Dendritic cell treated with granulocyte-macrophage colony-stimulating factor and Interleukin-4, amounts not matched to agents 40 ng/mL and 50 ng/mL, for 4 days (primary cell): ENCODE measurements at regions of chr15 and their contacts with region 1.

Region 1: GRCh38 chr15:48800811-48801455 is 9.9 kb downstream of the CEP152 start:
- H3K4me3 Mint-ChIP-seq: no peak overlapping the region
- H3K27ac Mint-ChIP-seq: no peak overlapping the region
- H3K4me1 Mint-ChIP-seq: peaks cover 5% of the 10 kb centered on the region
- H3K27me3 Mint-ChIP-seq: no peaks in the 10 kb centered on the region

Region 2: DNA sequence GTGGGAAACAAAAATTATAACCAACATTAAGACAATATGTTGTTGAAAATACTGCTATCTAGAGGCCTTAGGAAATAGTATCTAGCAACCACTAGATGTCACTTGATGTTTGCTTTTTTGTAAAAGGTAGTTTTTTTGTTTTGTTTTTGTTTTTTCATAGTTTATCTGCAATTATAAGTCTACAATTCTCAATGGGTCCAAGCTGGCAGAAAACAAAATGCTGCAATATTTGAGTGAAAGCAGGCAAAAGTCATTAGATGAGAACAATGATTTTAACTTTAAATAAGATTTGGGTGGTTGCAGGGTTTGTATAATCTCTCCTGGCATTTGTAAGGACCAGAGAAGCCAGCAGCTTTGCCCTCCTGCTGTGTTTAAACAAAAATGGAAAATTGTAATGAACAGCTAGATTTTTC is 442.7 kb before region 1 on chr15:
- intact Hi-C with region 1: loop called (anchors 5 kb)
- H3K4me3 Mint-ChIP-seq: no peak overlapping the region
- H3K27ac Mint-ChIP-seq: no peak overlapping the region
- H3K4me1 Mint-ChIP-seq: peaks cover 20% of the 10 kb centered on the region
- H3K27me3 Mint-ChIP-seq: no peaks in the 10 kb centered on the region

Region 3: DNA sequence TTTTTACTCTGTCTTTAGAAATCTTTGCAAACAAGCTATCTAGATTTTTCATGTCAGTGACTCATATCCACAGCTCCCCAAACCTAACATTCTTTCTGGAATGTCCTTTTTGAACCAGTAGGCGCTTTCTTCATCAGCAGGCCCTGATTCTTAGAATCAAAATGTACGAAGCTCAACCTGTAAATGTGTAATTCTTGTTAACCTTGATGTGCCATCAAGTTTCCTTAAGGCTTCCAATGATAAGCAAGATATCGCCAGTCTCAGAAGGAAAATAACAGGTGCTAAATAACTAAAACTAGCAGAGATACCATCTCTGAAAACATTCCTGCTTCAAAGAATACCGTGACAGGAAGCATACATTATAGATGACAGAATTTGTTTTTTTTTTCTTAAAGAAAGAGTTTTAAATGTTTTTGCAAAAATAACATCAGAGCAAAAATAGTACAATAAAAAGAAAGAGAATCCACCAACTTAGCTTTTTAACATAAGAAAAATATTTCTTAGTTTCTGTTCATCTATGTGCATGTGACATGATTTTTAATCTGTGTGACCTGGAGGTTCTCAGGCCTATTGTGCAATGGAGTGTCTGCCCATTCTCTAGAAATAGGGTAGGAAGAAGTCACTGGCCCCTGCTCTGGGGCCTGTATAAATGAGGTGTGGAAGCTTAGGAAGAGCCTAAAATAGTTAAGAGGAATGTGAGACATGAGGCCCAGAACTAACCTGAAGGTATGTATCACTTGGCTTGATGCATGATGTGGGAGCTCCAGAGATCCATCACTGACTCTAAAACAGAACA is 260.0 kb after region 1 on chr15:
- intact Hi-C with region 1: no loop called
- H3K4me3 Mint-ChIP-seq: no peak overlapping the region
- H3K27ac Mint-ChIP-seq: no peak overlapping the region
- H3K4me1 Mint-ChIP-seq: peaks cover 8% of the 10 kb centered on the region
- H3K27me3 Mint-ChIP-seq: no peaks in the 10 kb centered on the region